ENCODE measurements at regions of chr4 and their contacts with region 1.

Region 1: DNA sequence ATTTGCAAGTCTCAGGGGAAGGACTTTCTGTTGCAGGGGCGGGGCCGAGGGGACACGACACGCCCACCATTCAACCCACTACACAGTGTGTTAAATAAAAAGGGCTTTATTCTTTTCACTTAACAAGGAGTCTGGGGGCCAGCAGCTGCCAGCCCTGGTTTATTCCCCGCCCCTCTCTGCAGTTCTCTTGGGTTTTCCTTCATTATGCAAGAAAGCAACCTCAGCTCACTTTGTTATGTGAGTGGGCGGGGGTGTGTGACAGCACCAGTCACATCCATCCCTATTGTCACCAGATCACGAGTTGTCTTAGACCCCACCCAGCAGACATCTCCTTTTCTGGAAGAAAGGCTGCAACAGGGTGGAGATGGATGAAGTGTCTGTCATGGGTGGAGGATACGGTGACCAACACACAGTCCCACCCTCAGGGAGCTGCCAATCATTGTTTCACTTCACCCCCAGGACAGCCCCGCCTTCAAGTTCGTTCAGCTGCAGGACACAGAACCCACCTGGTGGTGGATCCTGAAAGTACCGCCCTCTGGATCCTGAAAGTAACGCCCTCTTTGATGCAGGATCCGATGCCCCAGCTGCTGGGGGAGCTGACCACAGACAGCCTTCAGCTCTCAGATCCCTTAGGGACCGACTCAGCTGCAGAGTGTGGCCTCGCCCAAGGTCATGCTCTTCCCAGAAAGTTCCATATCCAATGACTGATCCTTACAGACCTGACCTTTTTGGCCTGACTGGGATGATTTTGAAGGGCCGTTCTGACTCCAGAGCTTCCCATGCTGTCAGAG is 79.6 kb downstream of the SMIM20 start:
- DNase-seq: peak in 1 of 2 donors; percentile 41
- ATAC-seq: peak; percentile 52 to 68
- H3K4me3 ChIP-seq: no peak overlapping the region
- H3K27ac ChIP-seq: no peak overlapping the region
- H3K4me1 ChIP-seq: peaks cover 4% of the 10 kb centered on the region in 2 donors
- H3K27me3 ChIP-seq: no peaks in the 10 kb centered on the region
- CTCF ChIP-seq: no peak
- POLR2A ChIP-seq: no peak

Region 2: GRCh38 chr4:26719954-26720552 is 726.5 kb after region 1 on chr4:
- in situ Hi-C with region 1: no loop called
- intact Hi-C with region 1: loop called (anchors 5 kb)
- DNase-seq: no peak
- ATAC-seq: no peak
- H3K4me3 ChIP-seq: no peak overlapping the region
- H3K27ac ChIP-seq: no peak overlapping the region
- H3K4me1 ChIP-seq: peaks cover 0 to 4% of the 10 kb centered on the region in 2 donors
- H3K27me3 ChIP-seq: no peaks in the 10 kb centered on the region
- CTCF ChIP-seq: peak in 4 of 5 experiments; percentile 14 to 54 (median 26)
- POLR2A ChIP-seq: no peak